AG04450 (cell line): ENCODE measurements at regions of chr14 and their contacts with region 1.

Region 1: DNA sequence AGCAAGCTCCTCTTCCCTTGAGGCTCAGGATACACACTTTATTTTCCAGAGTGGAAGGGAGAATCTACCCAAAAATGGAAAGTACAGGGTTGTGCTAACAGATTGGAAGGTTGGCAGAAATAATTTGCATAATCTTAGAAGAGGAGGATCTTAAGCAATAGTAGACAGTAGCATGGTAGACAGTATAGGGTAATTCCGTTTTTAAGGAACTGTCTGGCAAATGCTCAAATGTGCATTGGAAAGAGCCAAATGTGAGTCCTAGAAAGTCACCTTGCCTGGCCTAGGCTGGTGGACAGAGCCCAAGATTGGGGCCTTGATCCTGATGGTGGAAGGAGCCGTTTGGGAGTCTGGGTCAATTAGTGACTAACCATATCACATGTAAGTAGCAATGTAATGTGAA is 13.1 kb upstream of the CARMIL3 start:
- DNase-seq: no peak
- H3K4me3 ChIP-seq: no peak overlapping the region
- H3K27ac ChIP-seq: no peak overlapping the region
- H3K27me3 ChIP-seq: peaks cover under 1% of the 10 kb centered on the region
- CTCF ChIP-seq: no peak

Region 2: DNA sequence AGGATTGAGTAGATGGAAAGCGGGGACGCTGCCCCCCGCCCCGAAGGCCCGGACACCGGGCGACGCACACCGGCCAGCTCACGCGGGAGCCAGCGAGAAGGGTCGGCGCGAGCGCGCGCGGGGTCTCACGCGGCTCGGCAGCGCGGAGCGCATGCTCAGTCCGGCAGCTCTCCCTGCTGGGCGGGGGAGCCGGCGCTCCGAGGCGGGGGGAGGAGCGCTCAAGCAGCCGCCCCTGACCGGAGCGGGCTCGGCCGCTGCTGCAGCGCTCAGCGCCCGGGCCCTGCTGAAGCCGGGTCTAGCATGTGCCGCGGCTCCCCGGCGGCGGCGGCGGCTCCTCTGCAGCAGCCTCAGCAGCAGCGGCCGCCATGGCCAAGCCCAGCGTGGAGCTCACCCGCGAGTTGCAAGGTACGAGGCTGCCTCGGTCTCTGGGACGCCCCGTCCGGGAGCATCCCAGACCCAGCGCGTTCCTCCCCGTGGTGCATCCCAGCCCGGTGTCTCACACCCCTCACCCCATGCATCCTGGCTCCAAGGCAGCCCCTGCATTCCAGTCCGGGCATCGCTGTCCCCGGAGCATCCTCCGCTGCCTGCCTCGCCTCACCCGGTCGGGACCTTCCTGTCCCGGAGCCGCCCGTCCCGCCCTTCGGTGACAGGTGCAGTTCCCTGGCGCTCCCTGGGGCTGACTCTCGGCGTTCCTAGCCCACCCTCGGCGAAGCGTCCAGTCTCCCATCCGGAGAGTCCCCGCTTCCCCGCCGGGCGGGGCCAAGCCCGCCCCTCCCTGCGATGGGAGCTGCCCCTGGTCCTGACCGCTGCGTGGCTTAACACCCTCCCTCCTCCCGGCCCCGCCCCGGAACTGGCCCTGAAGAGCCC is 13.3 kb after region 1 on chr14 and contains the start of gene CARMIL3:
- CTCF ChIA-PET with region 1: interaction called, 4 read pairs
- POLR2A ChIA-PET with region 1: interaction called, 15 read pairs
- DNase-seq: peak; percentile 16
- H3K4me3 ChIP-seq: peak within 1 kb of the TSS; percentile 60
- H3K27ac ChIP-seq: no peak within 1 kb of the TSS
- H3K27me3 ChIP-seq: peaks cover 30% of the 10 kb centered on the region
- CTCF ChIP-seq: no peak
- polyA plus RNA-seq, gene CARMIL3: 0.02 TPM in 1 of 2 replicates, not detected in the other